ENCODE measurements at regions of chr11 and their contacts with region 1.

Region 1: DNA sequence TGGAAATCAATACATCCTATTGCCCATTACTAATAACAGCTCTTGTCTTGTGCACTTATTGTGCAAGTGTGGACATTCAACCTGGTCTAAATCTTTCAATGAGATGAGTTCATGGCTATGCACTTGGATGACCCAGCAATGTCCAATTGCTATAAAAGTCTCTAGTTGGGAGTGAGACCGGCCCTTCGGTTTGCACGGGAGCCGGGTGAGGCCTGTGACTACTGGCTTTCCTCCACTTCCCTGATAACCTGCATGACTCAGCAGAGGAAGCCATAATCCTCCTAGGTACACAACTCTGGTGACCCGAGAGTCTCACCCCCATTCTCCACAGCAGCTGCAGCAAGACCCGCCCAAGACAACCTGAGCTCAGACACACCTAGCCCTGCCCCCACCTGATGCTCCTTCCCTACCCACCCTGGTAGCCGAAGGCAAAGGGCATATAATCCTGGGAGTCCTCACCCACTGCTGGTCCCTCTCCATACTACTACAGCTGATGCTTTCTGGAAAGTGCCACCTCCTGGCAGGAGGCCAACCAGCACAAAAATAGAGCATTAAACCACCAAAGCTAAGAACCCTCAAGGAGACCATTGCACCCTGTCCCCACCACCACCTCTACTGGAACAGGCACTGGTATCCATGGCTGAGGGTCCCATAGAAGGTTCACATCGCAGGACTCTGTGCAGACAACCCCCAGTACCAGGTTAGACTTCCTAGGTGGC is 136.1 kb upstream of the PAX6 start:
- DNase-seq: no peak

Region 2: DNA sequence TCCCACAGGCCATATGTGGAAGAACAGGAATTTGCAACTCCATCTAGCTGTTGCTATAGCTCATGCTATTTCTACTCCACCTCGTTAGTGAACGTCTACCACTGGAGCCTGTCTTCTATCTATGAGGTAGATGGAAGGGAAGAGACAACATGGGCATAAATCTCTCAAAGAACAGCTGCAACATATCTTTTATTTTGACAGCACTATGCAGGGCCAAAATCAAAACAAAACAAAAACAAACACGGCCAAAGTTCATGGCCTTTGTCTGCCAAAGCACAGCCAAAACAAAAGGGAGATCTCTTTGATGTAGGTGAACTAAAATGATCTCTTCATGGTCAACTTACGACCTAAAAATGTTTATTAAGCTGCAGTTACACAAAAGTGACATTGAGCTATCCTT is 1145.9 kb before region 1 on chr11:
- intact Hi-C with region 1: no loop called
- DNase-seq: no peak

Region 3: GRCh38 chr11:31995525-31996094 is 48.4 kb after region 1 on chr11:
- intact Hi-C with region 1: loop called in 1 of 2 experiments (anchors 2 kb)
- DNase-seq: no peak